Right ventricle myocardium inferior (tissue), 1 donor: ENCODE measurements at regions of chr6 and their contacts with region 1.

Region 1: DNA sequence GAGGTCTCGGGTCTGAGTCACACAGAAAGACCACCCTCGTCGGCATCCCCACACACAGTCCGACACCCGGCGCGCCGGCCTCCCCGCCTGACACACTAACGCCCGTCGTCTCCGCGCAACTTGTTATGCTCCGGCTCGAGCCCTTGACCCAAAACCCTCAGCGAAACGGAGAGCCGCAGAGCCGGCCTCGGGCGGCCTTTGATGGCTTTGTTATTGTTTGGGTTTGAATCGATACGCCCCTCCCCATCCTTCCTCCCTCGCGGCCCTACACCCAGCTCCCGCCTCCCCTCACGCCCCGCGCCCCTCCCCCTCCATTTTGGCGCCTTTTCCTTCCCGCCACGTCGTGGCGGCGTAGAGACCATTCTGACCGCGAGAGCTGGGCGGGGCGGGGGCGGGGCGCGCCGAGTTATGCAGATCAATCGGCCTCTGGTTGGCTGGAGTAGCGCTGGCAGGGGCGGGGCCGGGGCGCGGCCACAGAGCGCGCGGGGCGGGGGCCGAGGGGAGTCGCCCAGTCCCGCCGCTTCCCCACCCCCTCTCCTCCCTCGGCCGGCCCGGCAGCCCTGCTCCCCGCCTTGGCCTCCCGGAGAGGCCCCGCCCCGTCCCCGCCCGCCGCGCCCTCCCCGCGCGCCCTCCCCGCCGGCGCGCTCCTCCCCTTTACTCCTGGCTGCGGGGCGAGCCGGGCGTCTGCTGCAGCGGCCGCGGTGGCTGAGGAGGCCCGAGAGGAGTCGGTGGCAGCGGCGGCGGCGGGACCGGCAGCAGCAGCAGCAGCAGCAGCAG is at the start of gene PIM1:
- DNase-seq: peak; percentile 100
- ATAC-seq: peak; percentile 95
- total RNA-seq, gene PIM1: 27.8 TPM

Region 2: GRCh38 chr6:36885461-36886401 is 284.0 kb before region 1 on chr6 and contains the start of gene C6orf89:
- intact Hi-C with region 1: loop called (anchors 10 kb)
- DNase-seq: peak; percentile 99
- ATAC-seq: peak; percentile 99
- total RNA-seq, gene C6orf89: 79.4 TPM

Region 3: GRCh38 chr6:37029249-37029971 is 140.3 kb before region 1 on chr6:
- intact Hi-C with region 1: loop called (anchors 2 kb)
- DNase-seq: peak; percentile 93
- ATAC-seq: peak; percentile 92

Region 4: GRCh38 chr6:37102279-37103168 is 67.2 kb before region 1 on chr6:
- intact Hi-C with region 1: loop called (anchors 1 kb)
- DNase-seq: peak; percentile 92
- ATAC-seq: peak; percentile 94

Region 5: GRCh38 chr6:37210313-37210968 is 40.8 kb after region 1 on chr6:
- intact Hi-C with region 1: loop called (anchors 2 kb)
- DNase-seq: no peak
- ATAC-seq: peak; percentile 83